ENCODE measurements at regions of chr17 and their contacts with region 1.

Region 1: GRCh38 chr17:80426681-80427326 is 11.8 kb downstream of the ENDOV start:
- DNase-seq: peak; percentile 24 to 62
- ATAC-seq: peak; percentile 45 to 62
- H3K4me3 ChIP-seq: no peak overlapping the region
- H3K27ac ChIP-seq: no peak overlapping the region
- H3K4me1 ChIP-seq: peaks cover 0 to 15% of the 10 kb centered on the region in 2 donors
- H3K27me3 ChIP-seq: no peaks in the 10 kb centered on the region
- CTCF ChIP-seq: peak; percentile 96 to 99 (median 98)
- POLR2A ChIP-seq: no peak

Region 2: DNA sequence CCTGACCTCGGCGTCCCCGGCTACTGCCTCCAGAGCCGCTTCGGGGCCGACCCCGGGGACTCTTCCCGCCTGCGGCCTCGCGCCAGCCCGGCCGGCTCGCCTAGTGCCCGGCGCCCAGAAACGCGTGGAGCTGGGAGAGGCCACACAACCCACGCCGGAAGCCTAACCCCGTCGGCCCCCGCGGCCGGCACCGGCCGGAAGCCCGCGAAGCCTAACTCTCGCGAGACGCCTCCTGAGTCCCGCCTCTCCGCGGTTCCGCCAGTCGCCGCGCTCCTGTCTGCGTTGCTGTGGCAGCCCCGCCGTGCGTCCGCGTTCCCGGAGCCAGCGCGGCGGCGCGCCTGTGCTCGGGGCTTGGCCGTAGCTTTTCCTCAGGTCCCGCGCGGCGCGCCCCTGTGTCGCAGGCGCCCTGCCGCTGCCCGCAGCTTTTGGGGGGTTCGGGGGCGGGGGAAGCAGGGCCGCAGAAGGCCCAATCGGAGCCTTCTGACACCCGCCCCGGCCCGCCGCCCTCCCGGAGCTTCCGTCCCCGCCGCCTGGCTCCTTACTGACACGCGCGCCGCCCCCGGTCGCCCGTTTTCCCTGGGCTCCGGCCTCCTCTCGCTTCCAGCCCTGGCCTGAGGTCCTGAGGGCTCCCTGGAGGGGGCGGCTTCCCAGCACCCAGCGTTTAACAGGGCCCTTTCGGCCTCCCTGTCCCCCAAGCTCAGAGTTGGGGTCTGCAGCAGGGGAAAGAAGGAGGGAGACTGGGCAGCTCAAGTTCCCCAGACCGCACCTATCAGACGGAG is 27.9 kb after region 1 on chr17:
- in situ Hi-C with region 1: no loop called
- intact Hi-C with region 1: loop called (anchors 2 kb)
- DNase-seq: peak; percentile 93 to 95
- ATAC-seq: peak; percentile 78 to 79
- H3K4me3 ChIP-seq: peak overlapping the region; percentile 66 to 98 (median 89)
- H3K27ac ChIP-seq: peak overlapping the region; percentile 92 to 100 (median 98)
- H3K4me1 ChIP-seq: peaks cover 24 to 34% of the 10 kb centered on the region in 2 donors
- H3K27me3 ChIP-seq: no peaks in the 10 kb centered on the region
- CTCF ChIP-seq: peak in 1 of 5 experiments; percentile 24
- POLR2A ChIP-seq: peak; percentile 95 to 97

Region 3: DNA sequence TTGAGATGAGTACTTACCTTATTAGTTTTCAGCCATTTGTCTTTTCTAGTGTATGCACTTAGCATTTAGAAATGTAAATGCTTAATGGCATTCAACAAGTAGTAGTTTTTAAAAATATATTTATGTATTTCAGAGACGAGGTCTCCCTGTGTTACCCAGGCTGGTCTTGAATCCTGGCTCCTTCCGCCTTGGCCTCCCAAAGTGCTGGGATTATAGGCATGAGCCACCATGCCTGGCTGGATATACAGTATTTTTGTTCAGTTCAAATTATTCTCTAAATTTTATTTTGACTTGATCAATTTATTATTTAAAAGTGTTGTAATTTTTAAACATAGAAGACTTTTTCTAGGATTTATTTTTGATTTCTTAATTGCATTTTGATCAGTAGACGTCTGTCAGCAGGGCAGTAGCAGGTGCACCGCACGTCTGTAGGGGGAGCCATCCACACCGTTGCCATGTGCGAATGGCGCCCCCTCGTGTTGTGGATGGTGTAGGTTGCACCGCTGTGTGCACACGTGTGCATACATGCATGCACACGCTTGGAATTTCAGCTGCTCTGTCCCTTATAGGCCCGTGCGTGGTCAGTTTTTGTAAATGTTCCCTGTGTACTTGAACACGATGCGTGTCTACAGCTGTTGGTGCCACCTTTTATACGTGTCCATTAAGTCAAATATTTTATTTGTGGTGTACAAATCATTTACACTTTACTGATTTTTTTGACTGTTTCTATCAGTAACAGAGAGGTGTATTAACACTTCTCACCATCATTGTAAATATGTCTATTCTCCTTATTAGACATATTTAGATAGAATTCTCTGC is 148.5 kb after region 1 on chr17:
- in situ Hi-C with region 1: loop called in 3 of 4 experiments (anchors 10 kb)
- intact Hi-C with region 1: loop called (anchors 1 kb)
- DNase-seq: peak; percentile 35 to 68
- ATAC-seq: peak; percentile 75 to 96
- H3K4me3 ChIP-seq: no peak overlapping the region
- H3K27ac ChIP-seq: no peak overlapping the region
- H3K4me1 ChIP-seq: peaks cover 0 to 10% of the 10 kb centered on the region in 2 donors
- H3K27me3 ChIP-seq: no peaks in the 10 kb centered on the region
- CTCF ChIP-seq: peak; percentile 79 to 97 (median 92)
- POLR2A ChIP-seq: no peak

Region 4: DNA sequence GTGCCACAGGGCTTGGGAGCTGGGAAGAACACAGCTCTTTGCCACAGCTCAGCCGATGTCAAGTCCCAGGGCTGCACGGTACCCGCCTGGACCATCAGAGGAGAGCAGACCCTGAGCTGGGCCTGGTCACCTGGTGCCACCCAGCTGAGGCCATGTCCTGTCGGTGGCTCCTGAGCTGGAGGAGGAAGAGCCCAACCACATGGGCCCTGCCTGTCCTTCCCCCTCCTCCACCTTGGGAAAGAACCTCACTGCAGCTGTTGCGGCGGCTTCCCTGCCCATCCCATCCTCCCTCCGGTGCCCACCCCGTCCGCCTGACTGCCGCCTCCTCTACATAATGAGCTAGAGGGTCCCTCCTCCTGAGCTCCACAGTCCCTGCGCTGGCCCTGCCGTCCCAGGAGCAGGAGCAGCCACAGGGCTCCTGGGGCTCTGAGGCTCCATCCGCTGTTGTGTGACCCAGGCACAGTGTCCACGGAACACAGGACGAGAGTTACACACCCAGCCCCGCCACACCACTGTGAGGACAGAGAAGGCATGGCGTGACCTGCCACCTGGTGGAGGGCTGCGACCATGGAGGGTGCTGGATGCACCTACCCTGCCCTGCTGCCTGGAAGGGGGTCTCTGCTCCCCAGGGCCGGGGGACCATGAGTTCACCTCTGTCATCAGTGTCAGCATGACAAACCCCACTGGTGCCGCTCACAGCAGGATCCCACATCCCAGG is 543.4 kb after region 1 on chr17:
- in situ Hi-C with region 1: loop called in 1 of 4 experiments (anchors 5 kb)
- intact Hi-C with region 1: no loop called
- DNase-seq: peak; percentile 42 to 62
- ATAC-seq: peak; percentile 25 to 51
- H3K4me3 ChIP-seq: no peak overlapping the region
- H3K27ac ChIP-seq: peak overlapping the region in 2 of 4 donors; percentile 5 to 68
- H3K4me1 ChIP-seq: peaks cover 27 to 29% of the 10 kb centered on the region in 2 donors
- H3K27me3 ChIP-seq: peaks cover 0 to 11% (median 6%) of the 10 kb centered on the region in 3 donors
- CTCF ChIP-seq: peak; percentile 41 to 77 (median 60)
- POLR2A ChIP-seq: no peak

Region 5: GRCh38 chr17:81101614-81102306 is 675.0 kb after region 1 on chr17:
- in situ Hi-C with region 1: no loop called
- intact Hi-C with region 1: loop called (anchors 5 kb)
- DNase-seq: peak; percentile 51 to 76
- ATAC-seq: peak; percentile 61 to 79
- H3K4me3 ChIP-seq: no peak overlapping the region
- H3K27ac ChIP-seq: no peak overlapping the region
- H3K4me1 ChIP-seq: peaks cover 5 to 10% of the 10 kb centered on the region in 2 donors
- H3K27me3 ChIP-seq: no peaks in the 10 kb centered on the region
- CTCF ChIP-seq: peak; percentile 99 to 100 (median 100)
- POLR2A ChIP-seq: no peak